Naive thymus-derived CD8-positive, alpha-beta T cell (primary cell): ENCODE measurements at regions of chr6 and their contacts with region 1.

Region 1: GRCh38 chr6:34671801-34672656 is 24.5 kb downstream of the ILRUN start:
- DNase-seq: peak; percentile 42 to 88 (median 70)
- ATAC-seq: peak; percentile 93 to 99
- H3K4me3 Mint-ChIP-seq: peak overlapping the region; percentile 70 to 89 (median 82)
- H3K27ac Mint-ChIP-seq: peak overlapping the region; percentile 92 to 98 (median 97)
- H3K4me1 Mint-ChIP-seq: peaks cover 40 to 77% (median 69%) of the 10 kb centered on the region in 4 donors
- H3K27me3 Mint-ChIP-seq: no peaks in the 10 kb centered on the region

Region 2: GRCh38 chr6:34656378-34657036 is 15.5 kb before region 1 on chr6:
- POLR2A ChIA-PET with region 1: interaction called, 29 read pairs
- DNase-seq: peak in 3 of 10 donors; percentile 13 to 20 (median 17)
- ATAC-seq: peak; percentile 69 to 71
- H3K4me3 Mint-ChIP-seq: peak overlapping the region; percentile 59 to 93 (median 85)
- H3K27ac Mint-ChIP-seq: peak overlapping the region; percentile 84 to 96 (median 90)
- H3K4me1 Mint-ChIP-seq: peaks cover 19 to 60% (median 42%) of the 10 kb centered on the region in 4 donors
- H3K27me3 Mint-ChIP-seq: no peaks in the 10 kb centered on the region

Region 3: DNA sequence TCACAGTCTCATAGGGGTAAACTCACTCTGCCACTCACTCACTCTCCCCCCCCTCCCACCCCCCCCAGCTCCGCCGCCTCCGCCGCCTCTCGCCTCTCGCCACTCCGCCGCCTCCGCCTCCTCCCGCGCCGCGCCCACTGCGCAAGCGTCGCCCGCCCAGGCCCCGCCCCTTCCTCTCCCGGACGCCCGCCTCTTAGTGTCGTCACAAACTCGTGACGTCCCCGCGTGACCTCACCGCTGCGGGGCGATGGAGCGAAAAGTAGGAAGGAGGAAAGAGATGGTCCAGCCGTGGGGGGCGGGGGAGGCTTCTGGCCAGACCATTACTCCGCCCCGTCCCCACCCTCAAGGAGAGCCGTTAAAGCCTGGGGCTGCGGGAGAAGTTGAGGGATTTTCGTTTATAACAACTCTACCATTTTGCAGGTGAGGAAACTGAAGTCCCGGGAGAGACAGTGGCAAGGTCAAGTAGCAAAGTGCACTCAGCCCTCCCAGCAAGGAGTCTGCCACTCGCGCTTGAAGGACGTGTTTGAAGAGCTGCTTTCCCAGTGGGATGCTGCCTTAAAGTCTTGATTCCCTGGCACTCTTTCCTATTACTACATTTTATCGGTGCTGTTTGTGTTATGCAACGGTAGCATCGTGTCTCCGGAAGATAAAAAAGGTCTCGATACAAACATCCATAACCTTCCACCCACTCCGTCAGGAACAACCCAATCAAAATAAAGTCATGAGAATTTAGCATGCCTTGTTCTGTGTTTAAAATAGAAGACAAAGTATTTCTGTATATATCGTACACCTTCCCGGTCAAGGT is 24.9 kb after region 1 on chr6 and contains the start of gene ILRUN:
- POLR2A ChIA-PET with region 1: interaction called, 34 read pairs
- DNase-seq: peak; percentile 91 to 98 (median 95)
- ATAC-seq: peak; percentile 79 to 84
- H3K4me3 Mint-ChIP-seq: peak within 1 kb of the TSS; percentile 86 to 99 (median 98)
- H3K27ac Mint-ChIP-seq: peak within 1 kb of the TSS; percentile 92 to 100 (median 99)
- H3K4me1 Mint-ChIP-seq: peaks cover 28 to 50% (median 48%) of the 10 kb centered on the region in 4 donors
- H3K27me3 Mint-ChIP-seq: peaks cover 0 to 2% (median 0%) of the 10 kb centered on the region in 5 donors
- polyA plus RNA-seq, gene ILRUN: 10.5 to 14.5 (median 11.7) TPM